ENCODE measurements at regions of chr2 and their contacts with region 1.

Region 1: GRCh38 chr2:176140513-176141317 is 10.6 kb upstream of the HOXD4 start:
- DNase-seq: peak; percentile 57 to 69 (median 63)
- ATAC-seq: peak; percentile 79
- H3K4me3 ChIP-seq: no peak overlapping the region
- H3K27ac ChIP-seq: peak overlapping the region in 2 of 4 donors; percentile 26 to 27
- H3K4me1 ChIP-seq: peaks cover 25% of the 10 kb centered on the region
- H3K27me3 ChIP-seq: peaks cover 0 to 39% of the 10 kb centered on the region in 2 donors
- CTCF ChIP-seq: peak; percentile 75 to 92 (median 83)
- POLR2A ChIP-seq: no peak

Region 2: DNA sequence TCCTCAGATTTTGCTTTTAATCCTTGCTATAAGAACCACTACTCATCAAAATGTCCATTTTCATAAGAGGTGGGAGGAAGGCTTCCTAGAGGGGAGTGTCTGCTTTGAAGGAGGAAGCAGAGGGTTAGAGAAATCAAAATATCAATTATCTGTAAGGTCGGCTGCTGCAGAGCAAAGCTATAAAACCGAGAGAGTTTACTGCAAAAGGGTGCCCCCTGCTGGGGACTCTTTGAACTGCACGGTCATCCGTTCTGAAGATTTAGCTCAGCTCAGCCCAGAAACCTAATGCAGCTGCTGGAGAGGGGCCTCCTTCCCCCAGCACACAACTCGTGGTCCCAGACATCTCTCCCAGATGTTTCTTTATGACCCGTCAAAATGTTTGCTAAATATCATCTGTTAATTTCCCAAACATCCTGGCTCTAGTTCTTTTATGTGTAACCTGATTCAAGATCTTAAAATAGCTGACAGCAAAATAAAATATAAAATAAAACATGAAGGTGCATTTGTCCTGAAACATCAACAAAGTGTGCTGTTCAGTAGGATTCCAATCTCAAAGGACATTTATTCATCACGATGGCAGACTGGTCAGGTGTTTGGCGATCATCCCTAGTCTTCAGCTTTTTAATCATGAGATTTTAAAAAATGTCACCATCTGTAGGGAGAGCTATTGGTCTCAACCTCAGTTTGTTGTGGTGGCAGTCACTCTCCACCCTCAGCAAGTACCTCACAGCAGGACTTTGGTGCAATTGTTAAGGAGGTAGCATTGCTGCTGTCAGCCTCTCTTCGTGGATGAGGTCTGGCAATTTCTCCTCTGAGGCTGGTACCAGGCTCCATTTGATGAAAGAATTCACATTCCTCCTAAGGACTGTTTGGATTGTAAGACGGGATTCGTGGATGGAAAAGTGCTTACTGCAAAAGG is 314.4 kb after region 1 on chr2:
- intact Hi-C with region 1: loop called (anchors 5 kb)
- DNase-seq: peak; percentile 79 to 89 (median 84)
- ATAC-seq: peak; percentile 71
- H3K4me3 ChIP-seq: no peak overlapping the region
- H3K27ac ChIP-seq: no peak overlapping the region
- H3K4me1 ChIP-seq: no peaks in the 10 kb centered on the region
- H3K27me3 ChIP-seq: no peaks in the 10 kb centered on the region
- CTCF ChIP-seq: peak; percentile 75 to 93 (median 82)
- POLR2A ChIP-seq: no peak

Region 3: DNA sequence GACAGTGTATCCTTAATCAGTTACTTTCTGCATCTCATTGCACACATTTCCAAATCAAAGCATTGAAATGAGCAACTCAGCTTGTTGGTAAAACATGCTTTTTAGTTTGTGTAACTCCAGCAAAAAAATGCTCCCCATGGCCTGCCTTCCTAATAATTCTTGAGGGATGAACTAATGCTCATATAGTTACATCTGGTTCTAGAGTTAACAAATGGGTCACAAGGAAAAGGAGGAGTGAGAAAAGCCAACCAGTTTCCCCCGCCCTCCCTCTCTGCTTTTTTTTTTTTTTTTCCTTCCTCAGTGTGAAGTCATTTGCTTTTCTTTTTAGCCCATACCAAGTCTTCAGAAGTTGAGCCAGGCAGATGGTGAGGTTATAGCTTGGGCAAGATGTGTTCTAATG is 360.2 kb after region 1 on chr2:
- intact Hi-C with region 1: no loop called
- DNase-seq: no peak
- ATAC-seq: no peak
- H3K4me3 ChIP-seq: no peak overlapping the region
- H3K27ac ChIP-seq: no peak overlapping the region
- H3K4me1 ChIP-seq: no peaks in the 10 kb centered on the region
- H3K27me3 ChIP-seq: no peaks in the 10 kb centered on the region
- CTCF ChIP-seq: no peak
- POLR2A ChIP-seq: no peak

Region 4: DNA sequence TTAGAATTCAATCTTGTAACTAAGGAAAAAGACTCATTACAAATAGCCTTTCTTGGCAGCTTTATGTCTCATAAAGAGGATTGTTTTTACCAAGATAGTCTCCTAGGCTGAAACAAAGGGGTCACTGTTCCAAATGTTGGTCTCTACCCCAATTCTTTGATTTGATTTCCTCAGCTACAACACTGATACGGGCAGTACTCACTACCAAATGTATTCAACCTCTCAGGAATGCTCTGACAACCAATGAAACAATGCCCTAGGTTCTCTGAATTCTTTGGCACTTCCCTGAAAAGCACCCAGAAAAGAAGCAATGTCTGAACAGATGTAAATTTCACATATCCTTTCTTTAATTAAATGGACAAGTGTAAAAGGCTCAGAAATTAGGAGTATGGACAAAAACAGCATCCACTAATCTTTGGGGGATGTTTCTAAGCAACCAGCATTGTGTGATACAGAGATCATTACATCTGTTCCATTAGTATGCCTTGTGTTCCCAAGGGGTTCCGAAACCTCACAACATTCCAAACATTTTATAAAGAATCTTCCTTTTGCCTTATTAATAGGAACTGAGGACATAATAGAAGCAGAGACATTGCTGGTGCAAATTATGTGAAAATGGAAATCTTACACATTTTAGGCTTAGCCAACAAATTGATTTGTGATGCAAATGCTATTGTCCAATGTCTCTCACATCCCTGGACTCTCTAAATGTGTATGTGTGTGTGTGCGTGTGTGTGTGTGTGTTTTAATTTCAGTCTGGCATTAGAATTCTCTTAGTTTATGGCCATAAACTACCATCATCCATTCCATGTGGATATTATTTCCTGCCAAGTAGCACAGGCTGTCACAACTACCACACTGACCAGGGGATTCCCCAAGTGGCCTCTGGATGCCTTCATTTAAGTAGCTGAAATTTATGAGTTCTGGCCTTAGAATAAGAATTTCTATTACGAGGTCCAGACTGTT is 404.6 kb after region 1 on chr2:
- intact Hi-C with region 1: loop called (anchors 10 kb)
- DNase-seq: no peak
- ATAC-seq: no peak
- H3K4me3 ChIP-seq: no peak overlapping the region
- H3K27ac ChIP-seq: no peak overlapping the region
- H3K4me1 ChIP-seq: no peaks in the 10 kb centered on the region
- H3K27me3 ChIP-seq: no peaks in the 10 kb centered on the region
- CTCF ChIP-seq: no peak
- POLR2A ChIP-seq: no peak

Measured in body of pancreas (tissue), 4 donors.